AG04449 (cell line): ENCODE measurements at regions of chr12 and their contacts with region 1.

Region 1: GRCh38 chr12:124379938-124380754 is 85.3 kb downstream of the RFLNA start:
- DNase-seq: no peak
- H3K4me3 ChIP-seq: no peak overlapping the region
- CTCF ChIP-seq: peak; percentile 64

Region 2: GRCh38 chr12:124361074-124361970 is 18.8 kb before region 1 on chr12:
- CTCF ChIA-PET with region 1: interaction called, 20 read pairs
- POLR2A ChIA-PET with region 1: no interaction called
- DNase-seq: no peak
- H3K4me3 ChIP-seq: no peak overlapping the region
- CTCF ChIP-seq: no peak

Region 3: GRCh38 chr12:124369055-124369900 is 10.9 kb before region 1 on chr12:
- CTCF ChIA-PET with region 1: interaction called, 20 read pairs
- POLR2A ChIA-PET with region 1: no interaction called
- DNase-seq: no peak
- H3K4me3 ChIP-seq: no peak overlapping the region
- CTCF ChIP-seq: no peak

Region 4: GRCh38 chr12:124428130-124428791 is 48.1 kb after region 1 on chr12:
- CTCF ChIA-PET with region 1: interaction called, 10 read pairs
- POLR2A ChIA-PET with region 1: no interaction called
- DNase-seq: peak; percentile 26
- H3K4me3 ChIP-seq: no peak overlapping the region
- CTCF ChIP-seq: no peak